ENCODE measurements at regions of chr3 and their contacts with region 1.

Region 1: DNA sequence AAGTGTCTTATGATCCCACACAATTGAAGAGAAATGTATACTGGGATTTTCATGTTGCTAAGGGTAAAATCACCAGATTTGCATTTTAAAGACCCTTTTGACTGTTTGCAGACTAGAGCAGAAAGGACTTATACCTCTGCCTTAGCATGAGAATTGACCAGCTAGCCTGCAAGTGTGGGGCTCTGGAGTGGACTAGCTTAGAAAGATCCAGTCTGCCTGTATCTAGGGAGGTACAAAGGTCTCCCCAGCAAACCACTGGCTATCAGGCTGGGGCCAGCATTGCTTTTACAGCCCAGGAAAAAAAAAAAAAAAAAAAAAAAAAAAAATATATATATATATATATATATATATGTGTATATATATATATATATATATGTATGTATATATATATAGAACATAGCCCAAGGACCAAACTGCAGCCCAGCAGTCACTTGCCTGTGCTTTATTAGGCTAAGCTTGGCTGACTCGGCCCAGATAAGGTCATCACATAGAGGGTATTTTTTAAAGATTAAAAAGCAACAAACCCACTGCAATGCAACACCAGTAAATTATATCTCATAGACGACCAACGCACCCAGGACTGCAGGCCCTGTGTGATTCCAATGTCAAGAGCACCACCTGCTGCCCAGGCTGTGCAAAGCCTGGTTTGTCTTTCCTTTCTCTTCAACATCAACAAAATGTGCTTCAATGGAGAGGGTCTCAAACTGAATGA is 63.7 kb downstream of the DCLK3 start:
- DNase-seq: peak; percentile 53
- CTCF ChIP-seq: peak; percentile 90

Region 2: DNA sequence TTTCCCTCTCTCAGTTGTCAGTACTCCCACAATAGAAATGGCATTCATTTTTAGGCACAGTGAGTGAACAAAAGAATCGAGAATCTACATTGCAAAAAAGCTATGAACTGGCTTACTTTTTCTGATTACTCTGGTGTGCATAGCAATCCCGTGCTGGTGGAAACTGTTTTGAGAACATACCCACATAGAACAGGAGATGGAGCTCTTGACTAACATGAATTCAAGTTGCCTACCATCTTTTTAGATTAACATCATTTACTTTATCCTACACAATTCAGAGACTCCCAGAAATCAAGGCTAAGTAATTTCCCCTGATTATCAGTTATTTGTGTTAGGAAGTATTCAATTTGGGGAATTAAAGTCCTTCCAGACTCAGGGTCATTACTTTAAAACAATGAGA is 734.8 kb before region 1 on chr3:
- CTCF ChIA-PET with region 1: interaction called, 15 read pairs
- POLR2A ChIA-PET with region 1: no interaction called
- DNase-seq: no peak
- CTCF ChIP-seq: peak; percentile 37

Region 3: GRCh38 chr3:36663666-36664291 is 36.9 kb before region 1 on chr3:
- CTCF ChIA-PET with region 1: no interaction called
- POLR2A ChIA-PET with region 1: no interaction called
- DNase-seq: no peak
- CTCF ChIP-seq: no peak

Region 4: GRCh38 chr3:36756269-36756668 is 55.6 kb after region 1 on chr3:
- CTCF ChIA-PET with region 1: no interaction called
- POLR2A ChIA-PET with region 1: no interaction called
- DNase-seq: no peak
- CTCF ChIP-seq: no peak

Measured in GM10248 (cell line).